ENCODE measurements at regions of chr12 and their contacts with region 1.

Region 1: DNA sequence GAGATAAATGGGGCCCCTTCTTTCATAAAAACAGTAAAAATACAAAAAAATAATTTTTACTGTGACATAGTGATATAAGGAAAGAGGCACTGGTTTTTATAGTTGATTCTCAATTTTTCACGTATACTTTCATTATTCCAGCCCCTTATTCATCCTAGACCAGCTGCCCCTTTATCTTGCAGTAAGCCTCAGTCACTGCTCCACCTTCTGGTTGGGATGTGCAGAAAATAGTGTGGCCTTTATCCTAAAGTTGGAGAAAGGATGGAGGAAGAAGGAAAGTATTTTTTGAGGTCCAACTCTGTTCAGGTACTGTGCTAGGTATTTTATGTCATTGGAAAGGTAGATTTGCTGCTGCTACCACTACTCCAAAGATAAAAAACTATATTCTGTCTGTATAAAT is 172.7 kb downstream of the ANO6 start:
- DNase-seq: peak; percentile 56
- H3K4me3 ChIP-seq: no peak overlapping the region; a peak in 1 of 4 replicates
- H3K27ac ChIP-seq: no peak overlapping the region
- H3K4me1 ChIP-seq: no peaks in the 10 kb centered on the region
- H3K27me3 ChIP-seq: no peaks in the 10 kb centered on the region
- CTCF ChIP-seq: peak; percentile 73
- EP300 ChIP-seq: no peak
- RAD21 ChIP-seq: peak; percentile 84

Region 2: GRCh38 chr12:45131506-45131905 is 257.0 kb before region 1 on chr12:
- CTCF ChIA-PET with region 1: interaction called, 12 read pairs
- POLR2A ChIA-PET with region 1: no interaction called
- DNase-seq: no peak
- H3K4me3 ChIP-seq: no peak overlapping the region
- H3K27ac ChIP-seq: no peak overlapping the region
- H3K4me1 ChIP-seq: no peaks in the 10 kb centered on the region
- H3K27me3 ChIP-seq: no peaks in the 10 kb centered on the region
- CTCF ChIP-seq: no peak
- EP300 ChIP-seq: no peak
- RAD21 ChIP-seq: no peak

Region 3: DNA sequence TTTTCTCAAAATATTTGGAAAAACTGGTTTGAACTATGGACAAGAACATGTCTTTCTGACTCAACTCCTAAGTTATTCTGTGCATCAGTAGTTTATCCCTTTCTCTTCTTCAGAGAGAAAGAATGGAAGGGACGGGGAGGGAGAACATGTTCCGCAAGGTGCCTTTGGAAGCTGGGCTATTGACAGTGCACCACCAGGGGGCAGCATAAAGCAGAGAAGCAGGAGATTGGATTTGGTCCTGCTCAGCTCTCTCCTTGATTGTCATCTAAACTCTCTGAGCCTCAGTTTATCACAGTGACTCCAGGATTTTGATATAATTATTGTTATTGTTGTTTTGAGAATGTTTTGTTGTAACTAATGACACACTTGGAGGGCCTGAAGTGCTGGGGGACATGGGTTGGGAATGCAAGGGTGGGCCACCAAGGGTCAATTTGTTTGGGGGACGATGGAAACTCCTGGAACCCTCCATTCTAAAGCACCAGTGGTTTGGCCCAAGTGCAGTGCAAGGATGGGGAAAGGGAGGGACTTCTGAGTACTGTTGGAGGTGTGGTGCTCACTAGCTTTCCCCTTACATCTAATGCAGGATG is 218.0 kb before region 1 on chr12:
- CTCF ChIA-PET with region 1: interaction called, 16 read pairs
- POLR2A ChIA-PET with region 1: no interaction called
- DNase-seq: peak; percentile 67
- H3K4me3 ChIP-seq: no peak overlapping the region; a peak in 1 of 4 replicates
- H3K27ac ChIP-seq: no peak overlapping the region
- H3K4me1 ChIP-seq: no peaks in the 10 kb centered on the region
- H3K27me3 ChIP-seq: no peaks in the 10 kb centered on the region
- CTCF ChIP-seq: peak; percentile 91
- EP300 ChIP-seq: no peak
- RAD21 ChIP-seq: peak; percentile 86

Region 4: DNA sequence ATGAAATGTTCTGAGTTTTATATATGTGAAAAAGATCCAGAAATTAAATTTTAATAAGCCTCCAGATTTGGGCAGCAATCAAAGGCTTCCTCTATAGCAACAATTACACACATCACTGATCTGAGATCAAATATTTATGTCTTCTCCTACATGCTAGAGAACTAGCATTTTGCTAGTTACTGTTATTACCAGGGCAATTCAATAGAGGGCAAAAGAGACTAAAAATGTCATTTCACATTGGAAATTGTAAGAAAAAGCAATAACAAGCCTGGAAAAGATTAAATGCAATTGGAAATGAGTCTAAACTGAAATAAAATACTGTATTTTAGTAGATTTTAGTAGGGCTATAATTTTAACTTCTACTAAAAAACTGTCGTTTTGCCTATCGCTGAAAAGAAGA is 205.3 kb before region 1 on chr12:
- CTCF ChIA-PET with region 1: interaction called, 28 read pairs
- POLR2A ChIA-PET with region 1: no interaction called
- DNase-seq: peak; percentile 24
- H3K4me3 ChIP-seq: no peak overlapping the region
- H3K27ac ChIP-seq: no peak overlapping the region
- H3K4me1 ChIP-seq: 0 out of 4 replicates have a peak, but pooled peaks cover 0 to 4% of the 10 kb centered on the region in 2 experiments
- H3K27me3 ChIP-seq: no peaks in the 10 kb centered on the region
- CTCF ChIP-seq: peak; percentile 66
- EP300 ChIP-seq: no peak
- RAD21 ChIP-seq: peak; percentile 71

Region 5: GRCh38 chr12:45215419-45216229 is 172.9 kb before region 1 on chr12 and contains the start of gene ANO6:
- CTCF ChIA-PET with region 1: interaction called, 16 read pairs
- POLR2A ChIA-PET with region 1: no interaction called
- DNase-seq: peak; percentile 87
- H3K4me3 ChIP-seq: peak within 1 kb of the TSS; percentile 86 to 92
- H3K27ac ChIP-seq: peak within 1 kb of the TSS; percentile 98 to 99
- H3K4me1 ChIP-seq: peaks cover 0 to 3% of the 10 kb centered on the region in 2 experiments; a peak in 2 of 4 replicates
- H3K27me3 ChIP-seq: no peaks in the 10 kb centered on the region
- CTCF ChIP-seq: peak; percentile 49
- EP300 ChIP-seq: 0 out of 4 replicates have a peak, but pooled peaks have one; percentile 12 to 14
- RAD21 ChIP-seq: peak; percentile 58
- polyA plus RNA-seq, gene ANO6: 20.1 and 26.7 TPM in 2 replicates

Region 6: DNA sequence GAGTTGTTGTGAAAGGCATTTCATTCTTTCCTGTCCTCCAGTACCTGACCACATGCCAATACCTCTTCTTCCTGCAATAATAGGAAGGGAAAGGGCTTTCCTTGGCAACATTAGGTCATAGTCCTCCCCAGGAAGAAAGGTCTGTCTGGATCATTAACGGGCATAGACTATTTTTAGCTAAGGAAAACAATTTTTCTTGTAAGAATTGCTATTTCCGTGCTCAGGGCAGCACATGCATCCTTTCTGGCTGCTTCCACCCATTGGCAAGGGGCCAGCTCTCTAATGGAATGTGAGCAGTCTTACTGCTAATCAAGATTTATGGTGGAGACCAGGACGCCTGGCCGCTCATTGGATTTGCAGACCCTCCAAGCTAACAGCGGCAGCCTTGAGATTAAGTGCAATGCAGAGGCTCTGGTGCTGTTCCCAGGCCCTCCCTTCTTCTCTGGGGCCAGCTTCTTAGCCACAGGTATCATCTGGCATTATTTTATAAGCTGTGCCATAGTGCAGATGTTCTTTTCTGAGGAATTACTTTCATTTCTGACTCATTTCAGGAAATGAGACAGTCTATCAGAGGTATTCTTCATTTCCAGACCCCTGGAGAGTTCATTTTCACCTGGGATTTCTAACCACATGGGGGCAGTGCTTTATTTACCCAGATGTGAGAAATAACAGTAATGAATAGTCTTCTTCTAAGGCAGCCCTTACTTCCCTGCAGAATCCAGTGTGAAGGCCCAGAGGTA is 119.7 kb before region 1 on chr12:
- CTCF ChIA-PET with region 1: interaction called, 35 read pairs
- POLR2A ChIA-PET with region 1: no interaction called
- DNase-seq: peak; percentile 58
- H3K4me3 ChIP-seq: peak overlapping the region; percentile 19 to 31; a peak in 2 of 4 replicates
- H3K27ac ChIP-seq: peak overlapping the region; percentile 87 to 93
- H3K4me1 ChIP-seq: peaks cover 19 to 26% of the 10 kb centered on the region in 2 experiments
- H3K27me3 ChIP-seq: no peaks in the 10 kb centered on the region
- CTCF ChIP-seq: peak; percentile 72
- EP300 ChIP-seq: peak; percentile 82 to 84
- RAD21 ChIP-seq: peak; percentile 77